ENCODE measurements at regions of chr21 and their contacts with region 1.

Region 1: DNA sequence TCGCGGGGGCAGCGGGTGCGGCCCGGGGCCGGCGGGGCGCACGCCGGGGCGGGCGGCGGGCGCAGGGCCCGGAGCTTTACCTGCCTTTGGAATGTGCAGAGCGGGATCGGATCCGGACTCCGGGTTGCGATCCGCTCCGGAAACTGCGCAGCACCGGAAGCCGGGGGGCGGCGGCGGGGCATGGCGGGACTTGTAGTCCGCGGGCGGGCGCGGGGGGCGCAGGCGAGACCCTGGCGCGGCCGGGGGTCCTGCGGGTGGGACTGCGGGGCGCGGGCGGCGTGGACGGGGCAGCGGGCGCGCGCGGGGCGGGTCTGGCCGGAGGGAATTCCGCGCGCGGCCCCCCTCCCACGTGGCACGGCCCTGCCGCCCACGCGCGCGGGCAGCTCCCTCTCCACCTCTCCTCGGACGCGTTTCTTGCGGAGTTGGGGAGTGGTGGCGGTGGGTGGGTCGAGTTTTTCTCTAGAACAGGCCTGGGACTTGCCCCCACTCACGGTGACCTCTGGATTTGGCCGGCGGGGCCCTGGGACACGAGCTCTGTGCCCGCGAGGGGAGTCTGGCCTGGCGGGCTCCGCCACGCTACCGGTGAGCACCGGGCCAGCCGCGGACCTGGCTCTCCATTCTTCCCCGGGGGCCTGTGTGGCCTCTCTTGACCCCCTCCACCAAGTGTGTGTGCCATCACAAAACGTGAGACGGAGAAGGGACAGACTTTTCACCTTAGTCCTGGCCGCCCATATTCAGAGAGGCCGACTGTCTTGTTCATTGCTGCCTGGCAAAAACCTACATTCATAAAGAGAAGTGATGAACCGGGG is at the start of gene PRDM15:
- DNase-seq: peak; percentile 91
- H3K4me3 ChIP-seq: peak within 1 kb of the TSS; percentile 48 to 97 (median 86)
- H3K27ac ChIP-seq: peak within 1 kb of the TSS; percentile 76 to 89 (median 84)
- H3K4me1 ChIP-seq: peaks cover 0 to 28% (median 17%) of the 10 kb centered on the region in 4 donors
- H3K27me3 ChIP-seq: no peaks in the 10 kb centered on the region
- CTCF ChIP-seq: no peak
- EP300 ChIP-seq: no peak
- POLR2A ChIP-seq: no peak
- total RNA-seq, gene PRDM15: 3.5 to 6.9 (median 5.2) TPM

Region 2: DNA sequence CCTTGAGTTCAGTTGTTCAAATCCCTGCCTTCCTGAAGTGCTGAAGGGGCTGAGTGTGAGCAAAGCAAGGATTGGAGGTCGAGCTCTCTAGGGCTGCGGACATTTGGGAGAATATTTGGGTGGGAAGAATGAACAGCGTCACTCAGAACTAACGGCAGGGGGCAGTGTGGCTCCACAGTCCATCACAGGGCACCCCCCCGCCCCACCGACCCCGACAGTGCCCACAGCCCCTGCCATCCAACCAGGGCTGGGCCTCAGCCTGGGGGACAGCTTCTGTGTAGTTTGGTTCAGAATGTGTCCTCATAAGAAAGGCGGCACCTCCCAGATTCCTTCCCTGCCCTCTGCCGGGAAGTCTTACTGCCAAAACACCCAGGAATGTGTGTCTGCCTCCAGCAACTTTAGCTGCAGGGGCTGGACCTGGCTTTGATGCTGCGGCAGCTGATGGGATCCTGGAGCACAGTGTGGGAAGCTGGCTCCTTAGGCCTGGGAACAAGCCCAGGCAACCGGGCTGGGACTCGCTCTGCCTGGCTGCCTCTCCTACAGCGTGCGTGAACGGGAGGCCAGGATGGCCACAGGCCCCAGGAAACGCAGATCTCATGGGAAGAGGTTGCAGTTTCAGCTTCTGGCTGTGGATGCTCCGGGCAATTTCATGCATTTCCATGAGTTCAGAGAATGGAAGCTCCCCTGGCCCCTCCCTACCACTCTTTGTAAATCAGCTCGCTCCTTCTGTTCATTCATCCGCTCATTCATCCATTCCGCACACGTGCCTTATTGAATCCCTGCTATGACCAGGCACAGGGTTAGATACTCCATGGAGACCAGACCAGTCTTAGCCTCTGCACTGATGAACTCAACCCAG is 266.5 kb before region 1 on chr21:
- intact Hi-C with region 1: loop called (anchors 5 kb)
- DNase-seq: peak; percentile 91
- H3K4me3 ChIP-seq: peak overlapping the region in 1 of 4 donors; percentile 8
- H3K27ac ChIP-seq: peak overlapping the region; percentile 68 to 77 (median 72)
- H3K4me1 ChIP-seq: peaks cover 0 to 50% (median 45%) of the 10 kb centered on the region in 4 donors
- H3K27me3 ChIP-seq: no peaks in the 10 kb centered on the region
- CTCF ChIP-seq: peak; percentile 66 to 92 (median 84)
- EP300 ChIP-seq: no peak
- POLR2A ChIP-seq: no peak

Region 3: DNA sequence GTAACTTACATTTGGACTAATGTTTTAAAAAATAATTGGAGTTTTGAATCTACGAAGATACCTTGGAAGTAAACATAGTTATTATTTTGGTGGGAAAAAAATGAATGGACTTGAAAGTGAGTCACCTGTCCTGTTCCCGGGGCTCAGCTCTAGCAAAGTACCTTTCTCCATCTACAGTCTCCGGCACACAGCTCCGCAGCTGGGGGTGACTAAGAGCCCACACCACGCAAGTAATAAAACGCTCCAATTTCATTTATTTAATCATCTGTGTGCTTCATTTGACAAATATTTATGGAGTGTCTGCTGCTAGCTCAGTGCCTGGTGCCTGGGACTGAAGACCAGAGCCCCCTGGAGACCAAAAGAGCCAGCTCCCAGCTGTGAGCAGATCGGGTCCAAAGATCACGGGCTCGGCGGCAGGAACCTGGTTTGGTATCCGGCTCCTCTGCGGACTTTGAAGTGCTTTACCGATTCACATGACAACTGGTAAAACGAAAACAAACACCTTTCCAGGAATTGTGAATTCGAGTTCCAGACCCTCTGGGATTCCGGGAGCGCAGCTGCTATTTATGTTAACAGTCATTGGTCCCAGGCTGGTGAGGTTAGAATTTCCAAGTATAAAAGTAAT is 110.8 kb before region 1 on chr21:
- intact Hi-C with region 1: no loop called
- DNase-seq: peak; percentile 63
- H3K4me3 ChIP-seq: peak overlapping the region in 3 of 4 donors; percentile 7 to 24 (median 7)
- H3K27ac ChIP-seq: no peak overlapping the region
- H3K4me1 ChIP-seq: peaks cover 0 to 30% (median 23%) of the 10 kb centered on the region in 4 donors
- H3K27me3 ChIP-seq: peaks cover 39 to 100% (median 77%) of the 10 kb centered on the region in 3 donors
- CTCF ChIP-seq: no peak
- EP300 ChIP-seq: no peak
- POLR2A ChIP-seq: no peak

Region 4: GRCh38 chr21:41926117-41926806 is 46.9 kb after region 1 on chr21:
- intact Hi-C with region 1: loop called (anchors 5 kb)
- DNase-seq: peak; percentile 57
- H3K4me3 ChIP-seq: peak overlapping the region; percentile 23 to 50 (median 42)
- H3K27ac ChIP-seq: peak overlapping the region; percentile 69 to 87 (median 78)
- H3K4me1 ChIP-seq: peaks cover 0 to 58% (median 46%) of the 10 kb centered on the region in 4 donors
- H3K27me3 ChIP-seq: no peaks in the 10 kb centered on the region
- CTCF ChIP-seq: no peak
- EP300 ChIP-seq: no peak
- POLR2A ChIP-seq: no peak

Region 5: GRCh38 chr21:41953831-41954653 is 74.6 kb after region 1 on chr21 and contains the start of gene C2CD2:
- intact Hi-C with region 1: loop called (anchors 2 kb)
- DNase-seq: peak; percentile 83
- H3K4me3 ChIP-seq: peak within 1 kb of the TSS; percentile 54 to 96 (median 84)
- H3K27ac ChIP-seq: peak within 1 kb of the TSS; percentile 59 to 87 (median 76)
- H3K4me1 ChIP-seq: peaks cover 0 to 59% (median 42%) of the 10 kb centered on the region in 4 donors
- H3K27me3 ChIP-seq: no peaks in the 10 kb centered on the region
- CTCF ChIP-seq: no peak
- EP300 ChIP-seq: no peak
- POLR2A ChIP-seq: no peak
- total RNA-seq, gene C2CD2: 19.0 to 45.1 (median 22.2) TPM

Region 6: DNA sequence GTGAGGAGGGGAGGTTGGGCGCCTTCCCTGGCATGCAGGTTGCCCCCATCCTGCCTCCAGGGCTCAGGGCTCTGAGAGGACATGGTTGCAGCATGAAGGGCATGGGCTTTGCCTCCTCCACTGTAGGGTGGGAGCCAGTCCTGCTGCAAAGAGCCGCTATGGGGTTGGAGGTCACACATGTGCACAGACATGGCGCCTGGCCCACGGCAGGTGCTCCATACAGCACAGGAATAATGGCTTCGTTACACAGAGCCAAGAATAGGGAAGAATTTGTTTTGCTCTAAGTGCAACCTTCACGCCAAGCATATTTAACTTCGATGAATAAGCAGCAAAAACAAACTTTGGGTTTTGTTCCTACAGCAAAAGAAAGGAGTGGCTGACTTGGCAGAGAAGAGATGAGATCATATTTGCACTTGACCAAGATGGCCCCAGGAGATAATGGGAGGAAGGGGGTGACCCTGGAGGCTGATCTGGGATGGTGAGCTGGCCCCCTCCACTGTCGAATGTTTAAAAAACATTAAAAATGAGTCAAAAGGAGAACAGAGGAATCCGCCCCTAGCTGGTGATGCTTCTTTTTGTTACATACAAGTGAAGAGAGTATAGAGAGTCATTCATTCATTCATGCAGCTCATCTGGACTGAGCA is 86.8 kb after region 1 on chr21:
- intact Hi-C with region 1: no loop called
- DNase-seq: no peak
- H3K4me3 ChIP-seq: no peak overlapping the region
- H3K27ac ChIP-seq: no peak overlapping the region
- H3K4me1 ChIP-seq: no peaks in the 10 kb centered on the region
- H3K27me3 ChIP-seq: no peaks in the 10 kb centered on the region
- CTCF ChIP-seq: no peak
- EP300 ChIP-seq: no peak
- POLR2A ChIP-seq: no peak

Region 7: GRCh38 chr21:42009831-42010523 is 130.6 kb after region 1 on chr21 and contains the start of gene ZBTB21:
- intact Hi-C with region 1: loop called (anchors 2 kb)
- DNase-seq: peak; percentile 99
- H3K4me3 ChIP-seq: peak within 1 kb of the TSS; percentile 70 to 90 (median 81)
- H3K27ac ChIP-seq: peak within 1 kb of the TSS; percentile 95 to 99 (median 97)
- H3K4me1 ChIP-seq: peaks cover 0 to 16% (median 8%) of the 10 kb centered on the region in 4 donors
- H3K27me3 ChIP-seq: no peaks in the 10 kb centered on the region
- CTCF ChIP-seq: no peak
- EP300 ChIP-seq: peak in 1 of 4 donors; percentile 47
- POLR2A ChIP-seq: peak; percentile 83 to 86
- total RNA-seq, gene ZBTB21: 6.9 to 14.7 (median 7.7) TPM

Region 8: DNA sequence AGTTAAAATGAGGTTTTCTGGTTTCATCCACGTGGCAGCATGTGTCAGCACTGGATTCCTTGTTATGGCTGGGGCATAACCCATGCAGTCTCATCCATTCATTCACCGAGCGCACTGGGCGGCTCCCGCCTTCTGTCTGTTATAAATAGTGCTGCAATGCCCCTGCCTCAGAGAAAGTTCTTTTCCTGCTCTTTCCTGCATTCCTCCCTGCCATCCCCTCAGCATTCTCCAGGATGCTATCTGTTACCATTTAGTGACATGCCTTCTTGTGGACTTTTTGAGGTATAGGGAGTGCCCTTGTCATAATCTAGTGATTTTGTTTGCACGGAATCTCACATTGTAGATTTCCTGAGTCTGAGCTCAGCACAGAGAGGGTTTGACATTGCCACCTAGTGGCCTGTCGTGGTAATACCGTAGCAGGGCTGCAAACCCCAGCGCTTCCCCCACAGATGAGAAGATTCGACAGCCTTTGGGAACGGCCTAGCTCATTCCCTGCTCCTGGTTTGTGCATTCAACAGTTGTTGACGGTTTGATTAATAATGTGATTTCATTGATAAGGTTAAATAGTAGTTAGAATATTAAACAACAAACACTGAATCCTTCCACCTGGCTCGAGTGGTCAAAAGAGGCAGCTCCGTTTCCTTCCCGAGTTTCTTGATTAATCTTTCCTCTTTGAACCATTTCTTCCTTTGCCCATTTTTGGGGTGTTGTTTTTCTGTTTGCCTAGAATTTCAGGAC is 238.0 kb after region 1 on chr21:
- intact Hi-C with region 1: loop called (anchors 5 kb)
- DNase-seq: peak; percentile 85
- H3K4me3 ChIP-seq: peak overlapping the region in 1 of 4 donors; percentile 18
- H3K27ac ChIP-seq: no peak overlapping the region
- H3K4me1 ChIP-seq: peaks cover 0 to 8% (median 4%) of the 10 kb centered on the region in 4 donors
- H3K27me3 ChIP-seq: peaks cover 0 to 45% (median 10%) of the 10 kb centered on the region in 3 donors
- CTCF ChIP-seq: peak; percentile 86 to 96 (median 94)
- EP300 ChIP-seq: no peak
- POLR2A ChIP-seq: no peak

Region 9: DNA sequence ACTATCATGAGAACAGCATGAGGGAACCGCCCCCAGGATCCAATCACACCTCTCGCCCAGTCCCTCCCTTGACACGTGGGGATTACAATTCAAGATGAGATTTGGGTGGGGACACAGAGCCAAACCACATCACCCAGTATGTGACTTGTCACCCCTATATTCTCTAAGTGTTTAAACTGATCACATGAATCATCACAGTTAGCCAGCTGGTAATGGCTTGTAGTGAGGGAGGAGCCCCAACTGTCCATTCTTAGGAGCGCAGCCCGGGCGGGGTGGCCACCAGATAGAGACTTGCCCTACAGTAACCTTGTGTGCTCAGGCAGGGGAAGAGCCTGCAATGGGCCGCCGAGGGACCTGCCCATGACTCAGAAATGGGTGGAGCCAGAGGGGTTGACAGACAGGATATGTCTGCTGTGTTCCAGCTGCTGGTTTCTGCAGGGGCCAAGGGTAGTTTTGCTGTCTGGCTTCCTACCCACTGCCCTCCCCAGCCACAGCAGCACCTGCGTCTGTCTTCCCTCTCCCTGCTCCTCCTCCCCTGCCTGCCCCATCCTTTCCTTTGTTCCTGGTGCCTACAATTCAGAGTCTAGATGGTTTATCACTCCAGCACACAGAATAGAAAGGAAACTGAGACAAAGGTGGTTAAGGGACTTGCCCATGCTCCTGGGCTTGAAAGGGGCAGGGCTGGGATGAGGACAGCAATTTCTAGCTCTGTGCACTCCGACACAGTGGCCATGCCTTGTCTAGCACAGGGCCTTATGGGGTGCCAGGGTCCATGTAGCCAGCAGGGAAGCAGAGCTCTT is 348.7 kb after region 1 on chr21:
- intact Hi-C with region 1: loop called (anchors 10 kb)
- DNase-seq: peak; percentile 97
- H3K4me3 ChIP-seq: no peak overlapping the region
- H3K27ac ChIP-seq: peak overlapping the region; percentile 35 to 67 (median 58)
- H3K4me1 ChIP-seq: peaks cover 0 to 59% (median 44%) of the 10 kb centered on the region in 4 donors
- H3K27me3 ChIP-seq: no peaks in the 10 kb centered on the region
- CTCF ChIP-seq: no peak
- EP300 ChIP-seq: peak in 1 of 4 donors; percentile 33
- POLR2A ChIP-seq: no peak

Measured in sigmoid colon (tissue), 7 donors.